Thyroid gland (tissue), 4 donors: ENCODE measurements at regions of chr9 and their contacts with region 1.

Region 1: GRCh38 chr9:21789541-21790037 is 12.8 kb upstream of the MTAP start:
- DNase-seq: peak; percentile 48 to 55
- H3K4me3 ChIP-seq: no peak overlapping the region
- H3K27ac ChIP-seq: no peak overlapping the region
- H3K4me1 ChIP-seq: no peaks in the 10 kb centered on the region
- H3K27me3 ChIP-seq: no peaks in the 10 kb centered on the region
- CTCF ChIP-seq: peak; percentile 53 to 94 (median 76)
- POLR2A ChIP-seq: no peak

Region 2: DNA sequence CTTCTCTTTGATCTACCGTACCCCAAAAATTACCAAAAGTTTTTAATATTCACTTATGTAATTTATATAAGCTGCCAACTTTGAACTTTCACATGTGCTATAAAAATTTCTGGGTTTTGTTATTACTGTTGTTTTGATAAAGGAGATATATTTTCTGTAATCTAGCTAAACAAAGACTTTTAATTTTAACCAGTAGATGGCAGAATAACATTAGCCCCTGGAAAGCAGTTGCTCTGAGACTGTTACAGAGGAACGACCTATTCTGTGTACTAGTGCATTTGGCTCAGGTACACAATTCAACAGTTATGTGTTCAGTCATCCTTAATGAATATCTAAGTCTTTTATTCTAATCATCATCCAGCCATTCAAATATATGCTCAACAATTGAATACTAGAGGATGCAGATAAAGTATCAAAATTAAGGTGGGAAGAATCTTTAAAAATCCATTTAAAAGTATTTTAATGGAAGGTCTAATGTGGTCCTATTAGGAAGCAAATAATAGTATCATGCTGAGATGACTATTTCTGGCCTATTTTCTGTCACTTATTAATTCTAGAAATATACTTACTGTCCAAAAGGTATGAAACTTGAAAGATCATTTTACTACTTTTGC is 463.0 kb before region 1 on chr9:
- intact Hi-C with region 1: loop called (anchors 10 kb)
- DNase-seq: no peak
- H3K4me3 ChIP-seq: no peak overlapping the region
- H3K27ac ChIP-seq: no peak overlapping the region
- H3K4me1 ChIP-seq: peaks cover 1 to 14% of the 10 kb centered on the region in 2 donors
- H3K27me3 ChIP-seq: no peaks in the 10 kb centered on the region
- CTCF ChIP-seq: peak in 5 of 6 experiments; percentile 22 to 65 (median 53)
- POLR2A ChIP-seq: no peak

Region 3: GRCh38 chr9:21465859-21466518 is 323.6 kb before region 1 on chr9:
- intact Hi-C with region 1: loop called (anchors 10 kb)
- DNase-seq: no peak
- H3K4me3 ChIP-seq: no peak overlapping the region
- H3K27ac ChIP-seq: no peak overlapping the region
- H3K4me1 ChIP-seq: no peaks in the 10 kb centered on the region
- H3K27me3 ChIP-seq: no peaks in the 10 kb centered on the region
- CTCF ChIP-seq: peak in 5 of 6 experiments; percentile 43 to 84 (median 67)
- POLR2A ChIP-seq: no peak

Region 4: GRCh38 chr9:21883642-21884041 is 94.1 kb after region 1 on chr9:
- intact Hi-C with region 1: no loop called
- DNase-seq: no peak
- H3K4me3 ChIP-seq: no peak overlapping the region
- H3K27ac ChIP-seq: no peak overlapping the region
- H3K4me1 ChIP-seq: no peaks in the 10 kb centered on the region
- H3K27me3 ChIP-seq: no peaks in the 10 kb centered on the region
- CTCF ChIP-seq: no peak
- POLR2A ChIP-seq: no peak